ENCODE measurements at regions of chrX and their contacts with region 1.

Region 1: GRCh38 chrX:140733769-140734342 is 24.3 kb downstream of the LINC00632 start:
- DNase-seq: peak; percentile 21
- ATAC-seq: peak; percentile 33
- H3K4me3 Mint-ChIP-seq: no peak overlapping the region
- H3K27ac Mint-ChIP-seq: no peak overlapping the region
- H3K4me1 Mint-ChIP-seq: no peaks in the 10 kb centered on the region
- H3K27me3 Mint-ChIP-seq: no peaks in the 10 kb centered on the region

Region 2: GRCh38 chrX:140057001-140057411 is 676.9 kb before region 1 on chrX:
- CTCF ChIA-PET with region 1: no interaction called
- POLR2A ChIA-PET with region 1: no interaction called
- intact Hi-C with region 1: loop called in 1 of 2 experiments (anchors 5 kb)
- DNase-seq: peak; percentile 76
- ATAC-seq: peak; percentile 66
- H3K4me3 Mint-ChIP-seq: no peak overlapping the region
- H3K27ac Mint-ChIP-seq: no peak overlapping the region
- H3K4me1 Mint-ChIP-seq: no peaks in the 10 kb centered on the region
- H3K27me3 Mint-ChIP-seq: peaks cover 2% of the 10 kb centered on the region

Region 3: GRCh38 chrX:140141444-140142029 is 592.3 kb before region 1 on chrX:
- CTCF ChIA-PET with region 1: no interaction called
- POLR2A ChIA-PET with region 1: no interaction called
- intact Hi-C with region 1: loop called in 1 of 2 experiments (anchors 10 kb)
- DNase-seq: peak; percentile 41
- ATAC-seq: no peak
- H3K4me3 Mint-ChIP-seq: no peak overlapping the region
- H3K27ac Mint-ChIP-seq: no peak overlapping the region
- H3K4me1 Mint-ChIP-seq: no peaks in the 10 kb centered on the region
- H3K27me3 Mint-ChIP-seq: no peaks in the 10 kb centered on the region

Region 4: GRCh38 chrX:140229187-140229586 is 504.7 kb before region 1 on chrX:
- CTCF ChIA-PET with region 1: no interaction called
- POLR2A ChIA-PET with region 1: no interaction called
- intact Hi-C with region 1: no loop called
- DNase-seq: no peak
- ATAC-seq: no peak
- H3K4me3 Mint-ChIP-seq: no peak overlapping the region
- H3K27ac Mint-ChIP-seq: no peak overlapping the region
- H3K4me1 Mint-ChIP-seq: no peaks in the 10 kb centered on the region
- H3K27me3 Mint-ChIP-seq: no peaks in the 10 kb centered on the region

Region 5: GRCh38 chrX:140572724-140573123 is 161.1 kb before region 1 on chrX:
- CTCF ChIA-PET with region 1: no interaction called
- POLR2A ChIA-PET with region 1: no interaction called
- intact Hi-C with region 1: loop called in 1 of 2 experiments (anchors 2 kb)
- DNase-seq: peak; percentile 47
- ATAC-seq: peak; percentile 44
- H3K4me3 Mint-ChIP-seq: no peak overlapping the region
- H3K27ac Mint-ChIP-seq: no peak overlapping the region
- H3K4me1 Mint-ChIP-seq: no peaks in the 10 kb centered on the region
- H3K27me3 Mint-ChIP-seq: no peaks in the 10 kb centered on the region

Region 6: DNA sequence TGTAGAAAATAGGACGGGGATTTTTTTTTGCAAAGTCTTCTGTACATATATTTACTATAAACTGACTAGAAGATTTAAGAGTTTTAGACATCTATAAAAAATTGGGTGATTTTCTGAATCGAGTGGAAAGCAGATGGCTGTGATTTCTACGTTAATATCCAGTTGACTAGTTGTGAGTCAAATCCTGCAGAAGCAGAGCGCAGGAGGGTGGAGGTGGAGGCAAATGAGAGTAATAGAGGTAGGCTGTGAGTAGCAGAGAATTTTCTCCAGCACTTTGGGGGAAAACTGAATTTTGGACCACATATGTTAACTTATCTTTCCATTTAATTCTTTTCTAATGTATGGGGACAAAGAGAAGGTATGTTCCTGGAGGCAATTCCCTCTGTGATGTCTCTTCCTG is 146.9 kb before region 1 on chrX:
- CTCF ChIA-PET with region 1: no interaction called
- POLR2A ChIA-PET with region 1: no interaction called
- intact Hi-C with region 1: no loop called
- DNase-seq: no peak
- ATAC-seq: no peak
- H3K4me3 Mint-ChIP-seq: no peak overlapping the region
- H3K27ac Mint-ChIP-seq: no peak overlapping the region
- H3K4me1 Mint-ChIP-seq: no peaks in the 10 kb centered on the region
- H3K27me3 Mint-ChIP-seq: no peaks in the 10 kb centered on the region

Region 7: DNA sequence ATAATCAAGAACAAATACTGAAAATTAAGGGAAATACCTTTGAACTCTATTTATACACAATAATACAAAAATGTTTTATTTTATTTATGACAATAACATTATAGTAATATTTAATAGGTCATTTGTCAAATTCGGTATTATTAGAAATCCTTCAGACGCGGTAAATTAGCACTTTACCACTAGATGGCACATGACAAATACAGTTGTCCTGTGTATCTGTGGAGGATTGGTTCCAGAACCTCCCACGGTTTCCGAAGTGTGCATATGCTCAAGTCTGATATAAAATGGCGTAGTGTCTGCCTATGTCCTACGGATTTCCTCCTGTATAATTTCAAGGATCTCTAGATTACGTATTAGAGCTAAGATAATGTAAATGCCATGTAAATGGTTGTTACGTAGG is 32.4 kb before region 1 on chrX:
- CTCF ChIA-PET with region 1: no interaction called
- POLR2A ChIA-PET with region 1: no interaction called
- intact Hi-C with region 1: loop called (anchors 1 kb)
- DNase-seq: peak; percentile 7
- ATAC-seq: peak; percentile 44
- H3K4me3 Mint-ChIP-seq: no peak overlapping the region
- H3K27ac Mint-ChIP-seq: no peak overlapping the region
- H3K4me1 Mint-ChIP-seq: no peaks in the 10 kb centered on the region
- H3K27me3 Mint-ChIP-seq: no peaks in the 10 kb centered on the region